HepG2 (cell line): ENCODE measurements at regions of chr2 and their contacts with region 1.

Region 1: DNA sequence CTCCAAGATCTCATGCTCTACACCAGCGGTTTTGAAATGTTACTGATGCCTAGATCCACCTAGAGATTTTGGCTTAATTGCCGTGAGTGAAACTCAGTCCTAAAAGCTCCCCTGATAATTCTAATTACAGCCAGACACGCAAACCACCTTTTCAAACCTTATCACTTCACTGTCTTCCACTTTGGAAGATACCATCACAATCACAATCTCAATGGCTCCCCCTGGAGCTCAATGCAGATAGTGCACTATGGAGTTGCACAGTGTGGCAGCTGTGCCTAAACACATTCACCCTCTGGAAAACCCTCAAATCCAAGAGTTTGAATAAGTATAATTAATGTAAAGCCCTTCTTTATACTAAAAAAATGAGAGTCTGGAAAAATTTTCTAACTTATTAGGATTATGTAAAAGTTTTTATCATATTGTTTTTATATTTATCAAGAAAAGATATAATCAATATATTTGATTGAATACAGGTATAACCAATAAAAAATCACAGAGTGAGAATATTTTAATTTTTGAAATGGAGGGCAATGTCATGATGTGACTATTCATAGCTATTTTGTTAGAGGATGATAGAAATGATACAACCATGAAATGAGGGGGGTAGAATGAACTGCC is 102.9 kb upstream of the SLC8A1 start:
- DNase-seq: peak; percentile 56
- ATAC-seq: peak; percentile 93
- H3K4me3 ChIP-seq: no peak overlapping the region
- H3K27ac ChIP-seq: no peak overlapping the region
- H3K4me1 ChIP-seq: no peaks in the 10 kb centered on the region
- H3K27me3 ChIP-seq: no peaks in the 10 kb centered on the region
- CTCF ChIP-seq: peak; percentile 81
- EP300 ChIP-seq: no peak
- POLR2A ChIP-seq: no peak
- RAD21 ChIP-seq: peak; percentile 22; the same call in 1 of the 2 replicates

Region 2: DNA sequence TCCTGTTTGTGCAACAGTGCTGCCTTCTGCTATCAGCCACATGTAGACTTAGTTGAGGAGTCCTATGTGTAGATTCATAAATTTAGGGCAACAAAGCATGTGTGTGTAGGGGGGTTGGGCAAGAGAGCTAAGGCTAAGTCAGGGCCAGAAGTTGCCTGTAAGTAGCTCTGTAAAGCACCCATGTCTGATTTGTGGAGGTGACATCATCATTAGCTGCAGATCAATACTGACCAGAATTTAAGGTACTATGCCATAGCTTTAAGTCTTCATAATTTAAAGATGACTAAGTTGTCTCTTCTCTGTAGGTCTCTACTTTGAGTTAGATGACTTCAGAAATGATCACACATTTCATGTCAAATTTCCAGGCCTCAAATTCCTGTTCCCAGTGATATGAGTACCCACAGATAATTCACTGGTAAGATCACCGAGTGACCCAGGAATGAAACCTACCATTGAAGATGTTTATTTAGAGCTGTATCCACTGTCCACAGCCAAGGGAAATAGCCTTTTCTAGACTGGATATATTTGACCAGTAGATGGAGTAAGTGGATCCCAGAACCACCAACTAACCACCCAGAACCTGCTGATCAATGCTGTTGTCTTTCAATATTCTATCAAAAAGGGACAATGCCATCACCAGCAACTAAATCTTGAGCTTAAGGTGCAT is 341.8 kb before region 1 on chr2:
- CTCF ChIA-PET with region 1: interaction called, 3 read pairs
- POLR2A ChIA-PET with region 1: no interaction called
- in situ Hi-C with region 1: no loop called
- intact Hi-C with region 1: loop called (anchors 2 kb)
- DNase-seq: no peak
- ATAC-seq: peak; percentile 90
- H3K4me3 ChIP-seq: no peak overlapping the region
- H3K27ac ChIP-seq: no peak overlapping the region
- H3K4me1 ChIP-seq: no peaks in the 10 kb centered on the region
- H3K27me3 ChIP-seq: no peaks in the 10 kb centered on the region
- CTCF ChIP-seq: peak; percentile 52
- EP300 ChIP-seq: no peak
- POLR2A ChIP-seq: no peak
- RAD21 ChIP-seq: 0 out of 2 replicates have a peak, but pooled peaks have one; percentile 27

Region 3: GRCh38 chr2:40448468-40449079 is 106.2 kb before region 1 on chr2:
- CTCF ChIA-PET with region 1: no interaction called
- POLR2A ChIA-PET with region 1: no interaction called
- in situ Hi-C with region 1: no loop called
- intact Hi-C with region 1: loop called (anchors 1 kb)
- DNase-seq: peak; percentile 21
- ATAC-seq: peak; percentile 76
- H3K4me3 ChIP-seq: no peak overlapping the region
- H3K27ac ChIP-seq: no peak overlapping the region
- H3K4me1 ChIP-seq: no peaks in the 10 kb centered on the region
- H3K27me3 ChIP-seq: peaks cover 2 to 36% of the 10 kb centered on the region in 2 experiments; a peak in 4 of 5 replicates
- CTCF ChIP-seq: peak; percentile 60
- EP300 ChIP-seq: no peak
- POLR2A ChIP-seq: no peak
- RAD21 ChIP-seq: no peak

Region 4: DNA sequence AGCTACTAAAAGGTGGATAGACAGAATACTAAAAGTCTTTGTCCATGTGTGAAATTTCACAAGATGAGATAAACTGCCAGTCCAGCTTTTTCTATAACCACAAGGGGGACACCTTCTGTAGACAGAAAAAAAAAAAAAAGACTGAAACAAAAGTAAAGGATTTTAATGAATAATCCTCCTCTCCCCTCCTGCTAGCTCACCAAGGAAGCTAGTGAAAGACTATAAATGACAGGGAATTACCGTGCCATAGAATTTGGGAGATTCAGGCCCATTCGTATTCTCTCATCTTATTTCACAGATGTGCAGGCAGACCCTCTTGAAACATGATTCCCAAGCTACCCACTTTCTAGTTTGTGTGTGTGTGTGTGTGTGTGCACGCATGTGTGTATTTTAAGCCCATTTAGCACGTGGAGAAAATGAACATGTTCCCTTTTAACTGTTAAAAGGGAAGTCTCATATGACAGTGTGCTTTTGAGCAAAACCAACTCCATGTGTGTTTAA is 66.6 kb before region 1 on chr2:
- CTCF ChIA-PET with region 1: no interaction called
- POLR2A ChIA-PET with region 1: no interaction called
- in situ Hi-C with region 1: no loop called
- intact Hi-C with region 1: loop called (anchors 1 kb)
- DNase-seq: peak; percentile 33
- ATAC-seq: peak; percentile 66
- H3K4me3 ChIP-seq: no peak overlapping the region
- H3K27ac ChIP-seq: no peak overlapping the region
- H3K4me1 ChIP-seq: peaks cover 9% of the 10 kb centered on the region; the same call in 1 of the 2 replicates
- H3K27me3 ChIP-seq: no peaks in the 10 kb centered on the region
- CTCF ChIP-seq: peak; percentile 25; the same call in 1 of the 2 replicates
- EP300 ChIP-seq: no peak
- POLR2A ChIP-seq: no peak
- RAD21 ChIP-seq: no peak